Lower lobe of right lung (tissue), 2 donors: ENCODE measurements at regions of chr6 and their contacts with region 1.

Region 1: DNA sequence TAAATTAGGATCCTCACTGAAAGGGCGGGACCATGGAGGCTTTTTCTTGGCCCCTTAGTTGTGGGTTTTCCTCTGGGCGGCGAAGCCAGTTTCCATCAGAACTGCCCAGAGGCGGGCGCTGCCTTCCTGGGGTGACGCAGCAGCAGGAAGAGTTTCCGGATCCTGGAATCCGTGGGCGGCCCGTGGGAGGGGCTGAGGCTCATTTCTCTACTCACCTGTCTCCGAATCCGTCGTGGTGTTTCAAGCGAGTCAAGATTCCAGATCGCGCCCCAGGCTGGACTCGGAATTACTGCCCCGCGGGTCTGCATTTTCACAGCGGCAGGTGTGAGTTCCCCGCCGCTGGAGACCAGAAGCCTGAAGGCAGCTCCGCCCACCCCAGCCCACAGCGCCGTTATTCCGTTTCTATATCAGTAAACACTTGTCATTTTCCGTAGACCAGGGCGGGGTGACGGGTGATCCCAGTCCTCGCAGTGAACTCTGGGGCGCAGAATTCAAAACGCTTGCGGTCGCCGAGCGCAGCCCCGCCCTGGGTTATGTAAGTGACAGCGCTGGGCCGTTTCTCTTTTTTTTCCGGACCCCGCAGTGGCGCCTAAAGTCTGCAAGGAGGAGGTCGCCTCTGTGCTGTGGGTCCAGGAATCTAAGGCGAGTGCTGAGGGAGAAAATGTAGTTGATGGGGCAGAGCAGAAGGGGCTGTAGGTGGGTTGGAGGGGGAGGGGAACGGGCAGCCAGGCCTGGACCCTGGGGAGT is 27.2 kb upstream of the POU5F1 start:
- DNase-seq: peak; percentile 97
- ATAC-seq: peak; percentile 93 to 94
- H3K4me3 ChIP-seq: peak overlapping the region; percentile 72
- H3K27ac ChIP-seq: peak overlapping the region; percentile 99
- H3K4me1 ChIP-seq: peaks cover 39% of the 10 kb centered on the region
- H3K27me3 ChIP-seq: no peaks in the 10 kb centered on the region
- CTCF ChIP-seq: no peak

Region 2: GRCh38 chr6:31139599-31139998 is 58.1 kb before region 1 on chr6:
- intact Hi-C with region 1: loop called (anchors 5 kb)
- DNase-seq: no peak
- ATAC-seq: no peak
- H3K4me3 ChIP-seq: no peak overlapping the region
- H3K27ac ChIP-seq: no peak overlapping the region
- H3K4me1 ChIP-seq: peaks cover 24% of the 10 kb centered on the region
- H3K27me3 ChIP-seq: no peaks in the 10 kb centered on the region
- CTCF ChIP-seq: no peak

Region 3: GRCh38 chr6:31441365-31442267 is 243.9 kb after region 1 on chr6:
- intact Hi-C with region 1: no loop called
- DNase-seq: peak; percentile 93
- ATAC-seq: peak; percentile 97 to 98
- H3K4me3 ChIP-seq: no peak overlapping the region
- H3K27ac ChIP-seq: no peak overlapping the region
- H3K4me1 ChIP-seq: no peaks in the 10 kb centered on the region
- H3K27me3 ChIP-seq: peaks cover 5% of the 10 kb centered on the region
- CTCF ChIP-seq: peak; percentile 85